Tibial artery (tissue), 4 donors: ENCODE measurements at regions of chr13 and their contacts with region 1.

Region 1: DNA sequence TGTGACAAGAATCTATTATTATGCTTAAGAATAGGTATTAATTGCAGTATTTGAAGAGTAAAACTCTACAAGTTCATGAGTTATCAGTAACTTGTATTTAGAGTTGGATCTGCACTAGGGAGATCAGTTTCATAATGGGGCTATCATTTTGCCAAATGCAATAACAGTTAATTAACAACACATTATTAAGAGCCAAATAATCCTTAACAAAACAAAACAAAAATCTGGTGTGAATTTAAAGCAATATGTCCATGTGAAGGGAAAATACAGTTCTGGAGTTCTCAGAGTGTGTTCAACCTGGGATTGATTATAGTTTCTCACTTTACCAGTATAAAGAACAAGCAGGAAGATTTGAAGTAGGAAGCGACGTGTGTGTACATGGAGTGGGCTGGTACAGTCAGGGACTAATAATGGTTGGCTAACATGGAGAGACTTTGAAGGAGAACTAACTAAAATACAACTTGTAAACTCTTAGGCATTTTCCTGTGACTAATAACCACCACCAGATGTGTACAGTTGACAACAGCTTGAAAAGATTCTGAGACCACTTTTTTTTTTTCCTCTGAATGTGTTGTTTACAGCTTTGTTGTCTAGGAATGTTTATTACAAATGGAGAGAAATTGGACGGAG is 58.5 kb downstream of the POSTN start:
- DNase-seq: no peak
- H3K4me3 ChIP-seq: no peak overlapping the region
- H3K27ac ChIP-seq: no peak overlapping the region
- H3K4me1 ChIP-seq: no peaks in the 10 kb centered on the region
- H3K27me3 ChIP-seq: no peaks in the 10 kb centered on the region
- CTCF ChIP-seq: no peak

Region 2: DNA sequence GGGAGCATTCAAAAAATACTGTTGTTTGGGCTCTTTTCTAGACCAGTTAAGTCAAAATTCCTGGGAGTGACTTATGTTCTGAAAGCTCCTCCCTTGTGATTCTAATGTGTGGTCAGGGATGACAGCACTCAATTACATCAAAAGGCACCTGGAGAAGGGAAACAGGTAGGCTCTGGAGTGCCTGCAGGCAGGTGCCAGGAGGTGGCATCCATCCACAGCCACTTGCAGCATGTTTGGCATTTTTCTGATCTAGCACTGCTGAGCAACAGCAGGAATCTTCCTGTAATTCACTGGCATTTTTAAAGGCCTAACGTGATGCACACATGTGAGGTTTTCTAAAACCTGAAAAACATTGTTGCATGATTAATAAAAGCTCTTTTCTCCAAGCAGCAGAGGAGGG is 1013.2 kb before region 1 on chr13:
- intact Hi-C with region 1: loop called (anchors 10 kb)
- DNase-seq: no peak
- H3K4me3 ChIP-seq: no peak overlapping the region
- H3K27ac ChIP-seq: no peak overlapping the region
- H3K4me1 ChIP-seq: no peaks in the 10 kb centered on the region
- H3K27me3 ChIP-seq: no peaks in the 10 kb centered on the region
- CTCF ChIP-seq: no peak